Aorta (tissue), 5 donors: ENCODE measurements at regions of chr16 and their contacts with region 1.

Region 1: DNA sequence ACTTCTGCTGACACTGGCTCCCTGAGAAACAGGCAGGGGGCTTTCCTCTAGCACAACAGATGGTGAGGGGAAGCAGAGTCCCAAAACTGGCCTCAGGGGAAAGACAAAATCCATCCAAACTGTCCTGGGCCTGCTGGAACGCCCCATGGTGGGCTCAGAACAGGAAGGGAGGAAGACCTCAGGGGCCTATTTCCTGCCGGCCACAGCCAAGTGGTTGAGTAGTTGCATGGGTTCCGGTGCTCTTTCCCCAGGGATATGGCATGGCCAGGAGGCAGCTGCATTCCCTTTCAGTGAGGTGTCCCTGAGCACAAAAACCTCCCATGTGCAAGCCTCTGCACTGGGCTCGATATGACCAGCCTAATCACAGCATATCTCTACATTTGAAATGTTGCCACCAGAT is 303.0 kb upstream of the IRX5 start:
- DNase-seq: peak in 1 of 2 donors; percentile 54
- ATAC-seq: no peak
- H3K4me3 ChIP-seq: no peak overlapping the region
- H3K27ac ChIP-seq: no peak overlapping the region
- H3K4me1 ChIP-seq: peaks cover 0 to 3% of the 10 kb centered on the region in 2 donors
- H3K27me3 ChIP-seq: no peaks in the 10 kb centered on the region

Region 2: DNA sequence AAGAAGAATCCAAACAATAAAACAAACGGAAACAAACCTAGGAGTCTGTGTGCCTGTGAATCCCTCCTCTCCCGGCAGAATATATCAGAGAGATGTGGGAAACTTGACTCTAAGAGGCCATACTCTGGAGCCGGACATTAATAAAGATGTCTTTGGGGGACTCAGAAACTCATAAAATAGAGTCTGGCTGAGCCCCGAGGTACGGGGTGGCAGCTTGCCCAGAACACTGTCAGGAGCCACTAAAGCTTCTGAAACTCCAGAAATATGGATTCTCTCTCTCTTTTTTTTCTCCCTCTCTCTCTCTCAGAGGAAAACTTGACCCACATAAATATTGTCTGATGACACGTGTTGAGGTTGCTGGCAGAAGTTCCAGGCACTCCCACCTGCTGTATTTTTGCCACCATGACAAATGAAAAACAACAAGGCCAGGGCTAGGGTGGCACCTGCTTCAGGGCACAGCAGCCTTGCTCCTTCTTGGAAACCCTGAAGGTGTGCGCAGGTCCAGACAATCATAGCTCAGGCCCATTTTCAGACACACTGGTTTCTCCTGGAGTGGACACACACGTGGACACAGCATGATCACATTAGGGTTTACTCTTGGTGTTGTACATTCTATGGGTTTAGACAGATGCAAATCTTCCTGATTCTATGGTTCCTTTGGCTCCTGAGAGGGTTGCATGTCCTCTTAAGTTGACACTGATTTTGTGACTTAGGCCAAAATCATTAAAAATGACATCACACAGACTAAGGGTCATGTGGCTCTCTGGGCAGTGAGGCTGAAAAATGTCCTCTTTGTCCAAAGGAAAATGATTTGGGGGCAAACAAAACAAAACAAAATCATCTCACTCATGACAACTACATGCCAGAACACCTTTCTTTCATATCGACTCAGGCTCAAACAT is 58.5 kb before region 1 on chr16:
- intact Hi-C with region 1: loop called in 1 of 2 experiments (anchors 10 kb)
- DNase-seq: no peak
- ATAC-seq: no peak
- H3K4me3 ChIP-seq: no peak overlapping the region
- H3K27ac ChIP-seq: no peak overlapping the region
- H3K4me1 ChIP-seq: no peaks in the 10 kb centered on the region
- H3K27me3 ChIP-seq: no peaks in the 10 kb centered on the region

Region 3: GRCh38 chr16:54936979-54937670 is 309.5 kb after region 1 on chr16:
- intact Hi-C with region 1: no loop called
- DNase-seq: no peak
- ATAC-seq: peak; percentile 13
- H3K4me3 ChIP-seq: no peak overlapping the region
- H3K27ac ChIP-seq: no peak overlapping the region
- H3K4me1 ChIP-seq: no peaks in the 10 kb centered on the region
- H3K27me3 ChIP-seq: no peaks in the 10 kb centered on the region